WTC11 (cell line): ENCODE measurements at regions of chr11 and their contacts with region 1.

Region 1: DNA sequence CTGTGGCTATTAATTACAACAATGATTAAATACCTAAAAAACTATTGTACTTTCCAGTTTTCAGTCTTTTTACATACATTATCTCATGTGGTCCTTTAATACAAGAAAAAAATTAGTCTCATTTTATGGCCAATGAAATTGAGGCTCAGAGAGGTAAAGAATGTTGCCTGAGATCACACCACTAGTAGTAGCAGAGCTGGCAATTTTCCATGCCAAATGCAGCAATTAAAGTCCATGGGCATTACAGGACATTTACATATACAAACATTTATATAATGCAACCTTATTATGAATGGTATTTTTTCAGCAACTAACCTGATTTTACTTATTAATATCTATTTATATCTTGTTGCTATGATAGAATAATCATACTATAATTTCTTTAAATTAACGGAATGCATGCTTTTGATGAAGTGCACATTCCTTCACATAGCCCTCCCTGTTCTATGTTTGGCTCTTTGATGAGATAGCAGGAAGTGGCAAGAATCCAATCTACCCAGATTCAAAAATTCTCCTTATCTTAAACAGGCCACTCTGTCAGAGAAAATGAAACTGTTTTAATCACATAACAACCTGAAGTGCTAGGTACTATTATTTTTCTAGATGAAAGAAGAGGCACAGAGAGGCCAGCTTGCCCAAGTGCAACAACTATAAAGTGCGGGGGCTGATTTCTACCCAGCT is 120.9 kb upstream of the LDLRAD3 start:
- DNase-seq: no peak
- ATAC-seq: no peak
- H3K4me3 Mint-ChIP-seq: no peak overlapping the region
- H3K27ac Mint-ChIP-seq: no peak overlapping the region
- H3K4me1 Mint-ChIP-seq: peaks cover 15% of the 10 kb centered on the region
- H3K27me3 Mint-ChIP-seq: peaks cover 8% of the 10 kb centered on the region; the same call in 1 of the 2 replicates
- CTCF ChIP-seq: no peak

Region 2: GRCh38 chr11:35721651-35722282 is 101.2 kb before region 1 on chr11:
- CTCF ChIA-PET with region 1: interaction called, 15 read pairs
- POLR2A ChIA-PET with region 1: no interaction called
- DNase-seq: no peak
- ATAC-seq: no peak
- H3K4me3 Mint-ChIP-seq: no peak overlapping the region
- H3K27ac Mint-ChIP-seq: peak overlapping the region; percentile 37; the same call in 1 of the 2 replicates
- H3K4me1 Mint-ChIP-seq: peaks cover 21% of the 10 kb centered on the region
- H3K27me3 Mint-ChIP-seq: no peaks in the 10 kb centered on the region
- CTCF ChIP-seq: no peak

Region 3: DNA sequence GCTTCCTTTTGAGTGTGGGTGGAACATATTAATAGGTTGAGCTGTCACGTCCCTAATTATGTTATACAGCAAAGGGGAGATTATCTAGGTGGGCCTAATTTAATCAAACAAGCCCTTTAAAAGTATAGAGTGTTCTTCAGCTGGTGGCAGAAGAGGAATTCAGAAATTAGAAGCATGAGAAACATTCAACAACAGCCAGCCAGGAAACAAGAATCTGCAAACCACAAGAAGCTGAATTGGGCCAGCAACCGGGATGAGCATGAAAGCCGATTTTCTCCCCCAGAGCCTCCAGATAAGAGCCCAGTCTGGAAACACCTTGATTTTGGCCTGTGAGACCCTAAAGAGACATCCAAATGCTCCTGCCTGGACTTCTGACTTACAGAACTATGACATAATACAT is 15.1 kb after region 1 on chr11:
- CTCF ChIA-PET with region 1: interaction called, 107 read pairs
- POLR2A ChIA-PET with region 1: no interaction called
- DNase-seq: no peak
- ATAC-seq: no peak
- H3K4me3 Mint-ChIP-seq: no peak overlapping the region
- H3K27ac Mint-ChIP-seq: no peak overlapping the region
- H3K4me1 Mint-ChIP-seq: 0 out of 2 replicates have a peak, but pooled peaks cover 2% of the 10 kb centered on the region
- H3K27me3 Mint-ChIP-seq: peaks cover 3% of the 10 kb centered on the region; the same call in 1 of the 2 replicates
- CTCF ChIP-seq: no peak

Region 4: DNA sequence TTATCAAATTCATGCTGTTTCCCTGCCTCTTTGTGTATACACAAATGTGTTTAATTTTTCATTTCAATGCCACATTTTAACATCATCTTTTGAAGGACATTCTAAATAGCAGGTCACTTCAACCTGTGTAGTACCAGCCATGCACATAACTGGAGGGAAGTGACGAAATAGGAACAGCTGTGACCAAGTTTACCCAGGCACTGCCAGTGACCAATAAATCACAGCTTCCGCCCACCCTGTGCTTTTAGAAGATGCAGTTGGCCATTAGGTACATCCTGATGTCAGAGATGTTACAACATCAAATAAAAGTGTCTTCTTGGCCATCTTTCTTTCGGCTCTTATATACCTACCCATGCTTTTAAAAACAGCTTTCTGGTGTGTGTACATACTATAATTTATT is 128.7 kb after region 1 on chr11:
- CTCF ChIA-PET with region 1: interaction called, 21 read pairs
- POLR2A ChIA-PET with region 1: no interaction called
- DNase-seq: no peak
- ATAC-seq: no peak
- H3K4me3 Mint-ChIP-seq: no peak overlapping the region
- H3K27ac Mint-ChIP-seq: no peak overlapping the region
- H3K4me1 Mint-ChIP-seq: peaks cover 35% of the 10 kb centered on the region
- H3K27me3 Mint-ChIP-seq: no peaks in the 10 kb centered on the region
- CTCF ChIP-seq: no peak

Region 5: GRCh38 chr11:36056160-36056751 is 233.3 kb after region 1 on chr11:
- CTCF ChIA-PET with region 1: interaction called, 78 read pairs
- POLR2A ChIA-PET with region 1: no interaction called
- DNase-seq: peak; percentile 71
- ATAC-seq: peak; percentile 88
- H3K4me3 Mint-ChIP-seq: no peak overlapping the region
- H3K27ac Mint-ChIP-seq: no peak overlapping the region
- H3K4me1 Mint-ChIP-seq: peaks cover 29% of the 10 kb centered on the region
- H3K27me3 Mint-ChIP-seq: no peaks in the 10 kb centered on the region
- CTCF ChIP-seq: peak; percentile 81

Region 6: GRCh38 chr11:36156161-36156816 is 333.3 kb after region 1 on chr11:
- CTCF ChIA-PET with region 1: interaction called, 47 read pairs
- POLR2A ChIA-PET with region 1: no interaction called
- DNase-seq: no peak
- ATAC-seq: peak; percentile 28
- H3K4me3 Mint-ChIP-seq: no peak overlapping the region
- H3K27ac Mint-ChIP-seq: no peak overlapping the region
- H3K4me1 Mint-ChIP-seq: peaks cover 32% of the 10 kb centered on the region
- H3K27me3 Mint-ChIP-seq: no peaks in the 10 kb centered on the region
- CTCF ChIP-seq: no peak

Region 7: DNA sequence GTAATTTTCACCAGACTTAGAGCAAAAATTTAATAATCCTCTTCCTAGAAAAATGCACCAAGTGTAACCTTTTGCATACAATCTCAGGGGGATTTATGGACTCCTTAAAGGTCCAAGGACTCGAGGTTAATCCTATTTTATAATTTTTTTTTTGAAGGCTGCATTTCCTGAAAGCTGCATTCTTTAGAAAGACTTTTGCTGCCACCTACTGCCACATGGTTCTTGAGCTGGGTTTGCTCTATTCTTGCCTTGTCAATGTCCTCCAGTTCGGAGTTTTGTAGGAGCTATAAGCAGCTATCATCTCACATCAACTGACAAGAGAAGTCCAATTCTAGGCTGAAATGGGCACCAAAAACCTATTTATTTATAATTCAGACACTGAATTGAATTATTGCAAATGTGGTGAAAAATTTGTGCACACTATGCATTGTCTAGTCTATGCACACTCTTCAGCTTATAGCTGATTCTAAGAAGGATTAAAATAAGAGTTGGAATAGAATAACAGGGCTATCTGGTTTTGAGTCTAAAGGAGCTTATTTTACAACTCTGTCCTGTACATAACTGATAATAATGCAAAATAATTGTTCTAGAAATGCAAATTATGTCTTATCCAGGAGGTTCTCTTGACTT is 655.9 kb after region 1 on chr11:
- CTCF ChIA-PET with region 1: interaction called, 10 read pairs
- POLR2A ChIA-PET with region 1: no interaction called
- DNase-seq: no peak
- ATAC-seq: peak; percentile 60
- H3K4me3 Mint-ChIP-seq: no peak overlapping the region
- H3K27ac Mint-ChIP-seq: no peak overlapping the region
- H3K4me1 Mint-ChIP-seq: no peaks in the 10 kb centered on the region
- H3K27me3 Mint-ChIP-seq: peaks cover 9% of the 10 kb centered on the region; the same call in 1 of the 2 replicates
- CTCF ChIP-seq: no peak